ENCODE measurements at regions of chr9 and their contacts with region 1.

Region 1: DNA sequence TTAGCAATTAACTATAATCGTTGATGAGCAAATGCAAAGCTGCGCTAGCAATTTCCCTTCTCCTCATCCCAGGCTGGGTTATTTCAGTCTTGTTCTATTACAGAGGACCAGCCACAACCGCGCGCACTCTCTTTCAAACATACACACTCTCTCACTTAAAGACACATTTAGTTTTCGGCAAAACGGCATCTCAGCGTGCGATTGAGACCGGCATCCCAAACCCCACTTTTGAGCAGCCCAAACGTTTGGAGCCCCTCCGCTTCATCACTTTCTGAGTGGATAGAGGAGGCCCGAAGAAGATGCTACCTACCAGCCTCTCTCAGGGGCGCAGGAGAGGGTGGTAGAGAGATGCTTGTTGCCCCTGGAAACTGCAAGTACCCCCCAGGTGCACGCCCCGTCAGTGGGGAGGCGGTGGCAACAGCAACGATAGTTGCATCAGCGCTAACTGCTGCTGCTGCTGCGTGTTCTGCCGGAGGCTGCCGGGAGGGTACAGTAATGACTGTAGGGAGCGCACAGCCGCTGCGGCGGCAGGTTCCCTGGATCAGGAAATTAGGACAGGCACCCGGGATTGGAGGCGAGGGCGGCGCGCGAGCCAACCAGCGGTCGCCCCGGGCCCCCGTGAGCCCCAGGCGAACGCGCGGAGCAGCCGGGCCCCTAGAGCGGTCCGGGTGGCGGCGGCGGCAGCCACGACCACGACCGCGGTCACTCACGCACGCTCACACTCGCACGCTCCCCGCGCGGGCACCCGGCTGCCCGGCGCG is 488 bp upstream of the VLDLR start:
- DNase-seq: peak in 1 of 2 donors; percentile 90
- H3K4me3 ChIP-seq: peak overlapping the region; percentile 84 to 86
- H3K27ac ChIP-seq: peak overlapping the region in 1 of 2 donors; percentile 81
- H3K4me1 ChIP-seq: no peaks in the 10 kb centered on the region
- H3K27me3 ChIP-seq: no peaks in the 10 kb centered on the region
- CTCF ChIP-seq: peak in 1 of 3 experiments; percentile 40

Region 2: GRCh38 chr9:2125906-2126305 is 495.2 kb before region 1 on chr9:
- intact Hi-C with region 1: loop called (anchors 5 kb)
- DNase-seq: no peak
- H3K4me3 ChIP-seq: peak overlapping the region; percentile 36 to 37
- H3K27ac ChIP-seq: peak overlapping the region; percentile 85 to 89
- H3K4me1 ChIP-seq: peaks cover 7 to 73% of the 10 kb centered on the region in 2 donors
- H3K27me3 ChIP-seq: no peaks in the 10 kb centered on the region
- CTCF ChIP-seq: no peak

Region 3: DNA sequence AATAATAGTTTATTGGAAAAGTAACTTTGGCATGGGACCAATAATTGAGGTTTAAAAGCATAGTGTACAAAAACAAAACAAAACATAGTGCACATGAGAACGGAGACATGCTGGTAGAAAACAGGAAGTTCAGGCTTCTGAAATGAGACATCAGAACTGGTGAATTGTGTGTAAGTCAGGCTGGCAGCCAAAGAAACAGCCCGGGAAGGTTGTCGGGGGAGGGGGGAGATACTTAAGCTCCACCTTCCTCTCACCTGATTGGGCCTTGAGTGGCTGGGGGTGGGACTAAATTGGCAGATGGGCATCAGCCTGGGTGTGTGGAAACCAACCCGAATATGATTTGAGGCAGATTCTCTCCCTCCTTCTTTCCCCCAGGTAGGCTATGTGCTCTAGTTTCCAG is 349.7 kb before region 1 on chr9:
- intact Hi-C with region 1: no loop called
- DNase-seq: no peak
- H3K4me3 ChIP-seq: no peak overlapping the region
- H3K27ac ChIP-seq: no peak overlapping the region
- H3K4me1 ChIP-seq: no peaks in the 10 kb centered on the region
- H3K27me3 ChIP-seq: no peaks in the 10 kb centered on the region
- CTCF ChIP-seq: no peak

Region 4: DNA sequence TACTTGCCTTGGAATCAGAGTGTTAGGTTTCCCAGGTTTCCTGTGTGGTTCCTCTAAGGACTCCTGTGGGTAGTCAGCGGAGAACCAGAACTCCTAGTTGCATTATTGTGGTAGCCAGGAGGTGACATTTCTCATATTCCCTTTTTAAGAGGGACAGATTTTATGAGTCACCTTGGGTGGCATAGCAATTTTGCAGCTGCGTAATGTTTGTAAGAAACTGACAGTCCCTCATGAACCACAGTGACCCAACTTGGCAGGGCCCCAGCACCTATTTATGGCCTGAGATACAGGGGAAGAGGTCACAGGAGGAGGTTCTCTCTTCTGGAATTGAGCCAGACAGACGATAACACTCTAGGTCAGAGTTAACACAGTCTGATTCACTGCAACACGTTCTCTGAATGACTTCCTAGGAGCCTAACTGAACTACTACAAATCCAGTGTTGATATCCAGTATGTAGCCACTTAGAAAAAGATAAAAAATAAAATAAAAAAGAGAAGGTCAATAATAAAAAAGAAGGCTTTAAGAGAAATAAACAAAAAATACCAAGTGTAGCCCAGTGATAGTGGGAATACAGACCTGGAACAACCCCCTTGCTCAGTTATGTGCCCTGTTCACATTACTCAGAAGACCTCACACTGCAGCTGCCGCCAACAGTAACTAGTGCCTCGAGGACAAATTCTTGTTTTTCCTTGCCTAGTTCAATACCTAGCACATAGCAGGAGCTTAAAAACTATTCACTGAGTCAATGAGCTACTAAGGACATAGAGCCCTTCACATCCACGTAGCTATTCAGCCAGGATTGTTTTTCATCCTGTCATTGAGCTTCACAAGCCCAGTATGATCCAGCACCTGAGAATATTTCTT is 50.3 kb before region 1 on chr9:
- intact Hi-C with region 1: loop called (anchors 5 kb)
- DNase-seq: peak; percentile 37 to 89
- H3K4me3 ChIP-seq: no peak overlapping the region
- H3K27ac ChIP-seq: peak overlapping the region; percentile 36 to 51
- H3K4me1 ChIP-seq: peaks cover 0 to 7% of the 10 kb centered on the region in 2 donors
- H3K27me3 ChIP-seq: no peaks in the 10 kb centered on the region
- CTCF ChIP-seq: no peak

Region 5: DNA sequence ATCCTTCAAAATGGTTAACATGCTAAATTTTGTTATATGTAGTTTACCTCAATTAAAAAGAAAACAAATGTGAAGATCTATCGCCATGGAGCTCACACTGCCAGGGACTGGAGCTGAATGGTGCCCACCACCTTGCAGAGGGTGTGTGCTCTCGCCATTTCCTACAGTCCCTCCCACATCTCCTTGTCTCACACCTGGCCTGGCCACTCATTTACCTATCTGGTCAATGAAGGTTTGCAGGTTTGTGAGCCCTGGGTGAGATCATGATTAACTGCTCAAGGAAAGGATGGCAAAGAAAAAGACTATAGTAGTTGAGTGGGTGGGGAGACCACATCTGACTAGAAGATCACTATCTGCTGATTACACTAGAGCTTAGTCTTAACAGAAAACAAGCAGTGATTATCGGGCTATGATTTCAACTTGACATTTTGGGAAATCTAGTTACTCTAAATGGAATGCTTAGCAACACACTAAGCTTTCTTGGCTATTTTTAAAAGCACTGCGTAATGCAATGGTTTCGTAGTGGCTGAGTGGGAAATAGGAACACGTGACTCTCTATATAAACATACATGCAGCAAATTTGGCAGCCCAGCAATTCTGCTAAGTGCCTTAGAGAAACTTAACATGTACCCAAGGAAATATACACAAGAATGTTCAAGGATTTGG is 195.5 kb after region 1 on chr9:
- intact Hi-C with region 1: loop called (anchors 5 kb)
- DNase-seq: peak; percentile 12 to 88
- H3K4me3 ChIP-seq: no peak overlapping the region
- H3K27ac ChIP-seq: peak overlapping the region; percentile 84 to 93
- H3K4me1 ChIP-seq: peaks cover 6 to 18% of the 10 kb centered on the region in 2 donors
- H3K27me3 ChIP-seq: no peaks in the 10 kb centered on the region
- CTCF ChIP-seq: no peak

Region 6: DNA sequence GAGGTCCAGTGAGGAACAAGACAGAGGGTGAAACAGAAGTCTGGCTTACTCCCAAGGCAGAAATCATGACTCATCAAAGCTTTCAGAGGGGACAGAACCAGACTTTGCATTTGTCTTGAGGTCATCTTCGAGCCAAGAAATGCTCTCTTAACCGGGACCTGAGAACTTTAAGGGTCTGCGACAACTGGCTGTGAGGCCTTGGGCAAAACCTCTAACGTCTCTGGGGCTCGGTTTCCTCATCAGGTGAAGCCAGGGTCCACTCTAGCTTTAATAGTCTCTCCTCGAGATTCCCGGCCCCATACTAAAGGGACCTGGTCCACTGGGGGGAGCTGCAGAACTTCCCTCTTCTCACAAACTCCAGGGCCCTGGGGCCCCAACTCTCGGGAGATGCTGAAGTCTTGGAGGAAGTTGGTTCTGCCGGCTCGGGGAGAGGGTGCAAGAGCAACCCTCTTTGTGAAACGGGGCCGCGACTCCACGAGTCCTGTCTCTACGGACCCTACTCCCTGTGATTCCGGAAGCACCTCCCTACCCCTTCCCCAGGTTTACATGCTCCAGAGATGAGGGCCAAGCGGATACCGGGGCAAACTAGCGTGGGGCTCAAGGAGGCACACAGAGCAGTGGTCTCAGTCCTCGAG is 1676.2 kb after region 1 on chr9:
- intact Hi-C with region 1: loop called (anchors 10 kb)
- DNase-seq: peak; percentile 61 to 91
- H3K4me3 ChIP-seq: peak overlapping the region; percentile 68 to 77
- H3K27ac ChIP-seq: peak overlapping the region; percentile 97 to 99
- H3K4me1 ChIP-seq: peaks cover 12 to 26% of the 10 kb centered on the region in 2 donors
- H3K27me3 ChIP-seq: no peaks in the 10 kb centered on the region
- CTCF ChIP-seq: peak in 2 of 3 experiments; percentile 40 to 61

Measured in ascending aorta (tissue), 2 donors.